A549 (cell line): ENCODE measurements at regions of chr4 and their contacts with region 1.

Region 1: GRCh38 chr4:156771171-156771837 is 200.3 kb downstream of the PDGFC start:
- DNase-seq: peak in 1 of 2 experiments; percentile 48
- ATAC-seq: peak; percentile 40 to 67; a peak in 4 of 6 replicates
- H3K4me3 ChIP-seq: no peak overlapping the region
- H3K27ac ChIP-seq: peak overlapping the region; percentile 69 to 82
- H3K4me1 ChIP-seq: peaks cover 49% of the 10 kb centered on the region
- CTCF ChIP-seq: no peak
- EP300 ChIP-seq: no peak
- POLR2A ChIP-seq: no peak
- RAD21 ChIP-seq: no peak

Region 2: DNA sequence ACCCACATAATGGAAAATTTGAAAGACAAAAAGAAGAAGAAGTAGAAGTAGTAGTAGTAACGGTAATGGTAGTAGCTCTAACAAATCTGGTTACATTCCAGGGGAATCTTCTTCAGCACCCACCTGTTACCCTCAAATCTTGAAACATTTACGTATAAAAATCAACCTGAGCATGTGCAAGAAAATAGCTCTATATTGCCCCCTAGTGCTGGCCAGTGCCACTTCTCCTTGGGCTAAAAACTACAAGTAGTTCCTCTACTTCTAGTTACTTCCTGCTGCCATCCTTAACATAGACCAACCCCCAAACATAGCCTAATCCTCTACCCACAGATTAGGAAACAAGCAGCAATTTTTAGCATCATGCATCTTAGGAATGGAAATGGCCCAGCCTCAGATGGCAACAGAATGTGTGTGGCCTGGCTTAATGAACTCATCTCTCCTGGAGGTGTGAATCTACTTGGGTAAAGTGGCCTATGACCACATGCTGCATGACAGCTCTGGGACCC is 197.2 kb after region 1 on chr4:
- CTCF ChIA-PET with region 1: interaction called, 10 read pairs
- POLR2A ChIA-PET with region 1: interaction called, 3 read pairs
- DNase-seq: peak; percentile 25 to 67
- ATAC-seq: peak in 1 of 2 experiments; percentile 57; a peak in 3 of 6 replicates
- H3K4me3 ChIP-seq: no peak overlapping the region
- H3K27ac ChIP-seq: peak overlapping the region in 1 of 2 experiments; percentile 31; a peak in 1 of 6 replicates
- H3K4me1 ChIP-seq: 0 out of 3 replicates have a peak, but pooled peaks cover 8% of the 10 kb centered on the region
- CTCF ChIP-seq: peak; percentile 65
- EP300 ChIP-seq: no peak
- POLR2A ChIP-seq: no peak
- RAD21 ChIP-seq: peak; percentile 80 to 84